ENCODE measurements at regions of chr3 and their contacts with region 1.

Region 1: GRCh38 chr3:132445817-132446216 is 28.5 kb downstream of the DNAJC13 start:
- DNase-seq: no peak
- ATAC-seq: no peak
- H3K4me3 ChIP-seq: no peak overlapping the region
- H3K27ac ChIP-seq: peak overlapping the region in 1 of 2 donors; percentile 28
- H3K4me1 ChIP-seq: peaks cover 5 to 11% of the 10 kb centered on the region in 2 donors
- H3K27me3 ChIP-seq: no peaks in the 10 kb centered on the region

Region 2: DNA sequence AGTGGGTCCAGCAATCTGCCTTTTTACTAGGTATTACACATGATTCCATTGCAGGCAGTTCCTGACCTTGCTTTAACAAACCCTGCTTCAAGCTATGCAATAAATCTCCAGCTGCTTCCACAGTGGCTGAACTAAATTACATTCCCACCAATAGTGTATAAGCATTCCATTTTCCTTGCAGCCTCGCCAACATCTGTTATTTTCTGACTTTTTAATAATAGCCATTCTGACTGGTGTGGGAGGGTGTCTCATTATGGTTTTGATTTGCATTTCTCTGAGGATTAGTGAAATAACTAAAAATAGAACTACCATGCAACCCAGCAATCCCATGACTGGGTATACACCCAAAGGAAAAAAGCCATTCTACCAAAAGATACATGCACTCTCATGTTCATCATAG is 64.9 kb before region 1 on chr3:
- intact Hi-C with region 1: no loop called
- DNase-seq: no peak
- ATAC-seq: no peak
- H3K4me3 ChIP-seq: no peak overlapping the region
- H3K27ac ChIP-seq: no peak overlapping the region
- H3K4me1 ChIP-seq: no peaks in the 10 kb centered on the region
- H3K27me3 ChIP-seq: no peaks in the 10 kb centered on the region

Region 3: DNA sequence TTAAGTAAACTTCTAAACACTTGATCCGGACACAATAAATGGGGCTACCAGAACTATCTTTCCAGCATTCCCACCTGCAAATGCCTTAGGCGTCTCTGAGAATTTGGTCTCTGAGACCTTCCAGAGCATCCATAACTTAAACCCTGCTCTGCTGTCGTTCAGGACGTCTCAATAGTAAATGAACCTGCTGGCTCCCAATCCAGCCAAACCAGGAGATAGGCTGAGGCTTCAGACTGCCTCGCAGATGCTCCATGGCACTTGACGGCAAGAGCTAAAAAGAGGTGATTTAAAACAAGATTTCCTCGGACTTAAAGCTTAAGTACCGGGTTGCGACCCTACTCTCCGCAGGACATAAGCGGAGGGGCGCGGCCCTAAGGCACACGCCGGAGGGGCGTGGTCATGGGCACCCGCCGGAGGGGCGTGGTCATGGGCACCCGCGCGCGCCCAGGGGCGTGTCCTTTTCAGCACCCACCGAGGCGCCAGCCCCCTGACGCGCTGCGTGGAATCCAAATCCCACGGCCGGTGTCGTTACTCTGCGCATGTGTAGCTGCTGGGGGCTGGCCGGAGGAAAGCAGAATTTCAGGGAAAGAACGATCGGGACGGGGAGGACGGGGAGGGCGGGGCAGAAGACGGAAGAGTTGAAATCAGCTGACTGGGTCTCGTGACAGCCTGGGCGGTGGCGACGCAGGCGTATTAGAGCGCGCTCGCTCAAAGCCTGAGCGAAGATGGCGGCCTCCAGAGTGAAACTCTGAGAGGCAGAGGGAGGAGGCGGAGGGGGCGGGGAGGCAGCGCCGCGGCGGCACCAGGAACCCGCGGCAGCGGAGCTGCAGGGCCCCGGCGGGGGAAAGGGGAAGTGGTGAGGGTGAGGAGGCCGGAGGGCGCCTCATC is 28.8 kb before region 1 on chr3 and contains the start of gene DNAJC13:
- intact Hi-C with region 1: loop called in 1 of 2 experiments (anchors 5 kb)
- DNase-seq: peak; percentile 97
- ATAC-seq: peak; percentile 98
- H3K4me3 ChIP-seq: peak within 1 kb of the TSS; percentile 80 to 92
- H3K27ac ChIP-seq: peak within 1 kb of the TSS; percentile 41 to 44
- H3K4me1 ChIP-seq: peaks cover 1 to 3% of the 10 kb centered on the region in 2 donors
- H3K27me3 ChIP-seq: no peaks in the 10 kb centered on the region
- total RNA-seq, gene DNAJC13: 49.8 to 70.4 TPM

Measured in aorta (tissue), 5 donors.